ENCODE measurements at regions of chr7 and their contacts with region 1.

Region 1: DNA sequence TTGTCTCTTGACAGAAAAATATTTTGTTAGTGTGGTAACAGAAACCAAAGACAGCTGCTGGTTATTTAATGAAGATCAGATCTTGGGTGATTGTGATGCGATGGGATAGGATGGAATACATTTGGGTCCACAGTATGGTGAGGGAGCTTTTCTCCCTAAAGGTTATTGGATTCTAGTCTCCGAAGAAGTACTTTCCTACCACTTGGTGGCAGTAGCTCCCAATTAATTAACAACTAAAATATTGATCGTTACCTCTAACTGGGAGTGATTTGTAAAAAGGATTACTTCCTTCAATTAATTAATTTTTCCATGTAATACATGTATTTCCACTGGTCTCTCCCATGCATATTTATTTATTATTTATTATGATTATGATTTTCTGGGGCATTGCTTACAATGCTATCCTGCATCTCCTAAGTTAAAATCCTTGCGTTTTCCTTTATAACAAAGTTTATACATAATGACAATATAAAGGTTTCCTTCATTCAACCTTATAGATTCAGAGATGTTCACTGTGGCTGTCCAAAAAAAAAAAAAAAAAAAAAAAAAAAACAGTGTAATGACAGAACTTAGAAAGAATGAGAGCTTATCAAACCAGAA is 25.6 kb downstream of the TMEM196 start:
- DNase-seq: peak; percentile 66

Region 2: DNA sequence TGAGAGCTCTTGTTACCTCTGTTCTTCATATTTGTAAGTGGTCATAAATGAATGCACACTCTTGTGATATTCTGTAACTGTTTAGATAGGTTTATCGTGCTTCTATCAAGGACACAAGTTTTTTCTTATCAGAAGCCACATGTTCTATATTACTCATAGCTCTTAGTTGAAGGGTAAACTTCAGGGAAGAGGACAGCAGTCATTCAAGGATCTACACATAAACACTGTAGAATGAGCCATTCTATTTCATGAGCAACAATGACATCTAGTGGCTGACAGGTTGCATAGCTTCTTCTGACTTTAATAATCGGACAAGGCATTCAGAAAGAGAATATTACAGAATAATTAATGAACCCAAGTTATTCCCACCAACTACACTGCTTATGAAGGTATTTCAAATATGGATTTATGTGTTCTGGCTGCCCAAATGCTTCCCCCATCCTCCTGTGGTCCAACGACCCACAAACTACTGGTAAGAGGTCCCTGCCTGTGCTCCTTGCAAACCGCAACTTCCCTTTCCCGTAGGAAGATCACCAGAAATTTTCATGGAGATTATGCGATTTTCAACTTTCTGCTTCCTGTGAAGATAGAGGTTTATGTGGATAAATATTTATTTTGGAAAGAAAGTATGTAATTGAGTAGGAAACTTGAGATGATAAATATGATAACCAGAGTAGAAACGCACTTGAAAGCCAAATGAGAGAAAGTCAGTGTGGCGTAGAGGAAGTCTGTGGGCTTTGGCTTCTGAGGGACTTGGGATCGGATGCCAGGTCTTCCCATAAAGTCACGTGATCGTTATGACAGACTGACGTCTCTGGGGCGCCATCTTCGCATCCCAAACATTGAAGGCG is 850.8 kb after region 1 on chr7:
- in situ Hi-C with region 1: loop called (anchors 25 kb)
- DNase-seq: peak; percentile 70